ENCODE measurements at regions of chr12 and their contacts with region 1.

Region 1: GRCh38 chr12:92145731-92146496 is at the start of gene BTG1:
- DNase-seq: peak; percentile 95
- ATAC-seq: peak; percentile 77
- H3K4me3 Mint-ChIP-seq: peak within 1 kb of the TSS; percentile 88
- H3K27ac Mint-ChIP-seq: peak within 1 kb of the TSS; percentile 99
- H3K4me1 Mint-ChIP-seq: peaks cover 27% of the 10 kb centered on the region
- H3K27me3 Mint-ChIP-seq: no peaks in the 10 kb centered on the region
- total RNA-seq, gene BTG1: 249 to 255 TPM

Region 2: DNA sequence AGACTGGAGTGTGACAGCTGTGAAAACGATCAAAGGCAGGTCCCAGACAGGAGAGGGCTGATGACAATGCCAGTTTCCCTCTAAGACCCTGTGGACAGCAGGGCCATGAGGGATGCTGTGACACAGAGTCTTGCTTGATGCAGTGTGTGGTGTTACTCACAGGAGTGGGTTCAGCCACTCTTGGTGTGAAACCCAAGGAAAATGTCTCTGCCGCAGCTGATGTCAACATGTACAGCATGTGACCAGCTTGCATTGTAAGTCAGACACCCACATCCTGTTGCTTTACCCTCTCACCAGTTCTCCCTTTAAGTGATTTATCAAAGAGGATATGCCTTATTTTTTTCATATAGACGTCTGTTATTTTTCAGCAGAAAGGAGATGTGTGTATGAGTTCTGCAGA is 268.9 kb before region 1 on chr12:
- POLR2A ChIA-PET with region 1: interaction called, 47 read pairs
- DNase-seq: peak; percentile 64
- ATAC-seq: peak; percentile 100
- H3K4me3 Mint-ChIP-seq: peak overlapping the region; percentile 72
- H3K27ac Mint-ChIP-seq: peak overlapping the region; percentile 94
- H3K4me1 Mint-ChIP-seq: peaks cover 41% of the 10 kb centered on the region
- H3K27me3 Mint-ChIP-seq: no peaks in the 10 kb centered on the region

Region 3: DNA sequence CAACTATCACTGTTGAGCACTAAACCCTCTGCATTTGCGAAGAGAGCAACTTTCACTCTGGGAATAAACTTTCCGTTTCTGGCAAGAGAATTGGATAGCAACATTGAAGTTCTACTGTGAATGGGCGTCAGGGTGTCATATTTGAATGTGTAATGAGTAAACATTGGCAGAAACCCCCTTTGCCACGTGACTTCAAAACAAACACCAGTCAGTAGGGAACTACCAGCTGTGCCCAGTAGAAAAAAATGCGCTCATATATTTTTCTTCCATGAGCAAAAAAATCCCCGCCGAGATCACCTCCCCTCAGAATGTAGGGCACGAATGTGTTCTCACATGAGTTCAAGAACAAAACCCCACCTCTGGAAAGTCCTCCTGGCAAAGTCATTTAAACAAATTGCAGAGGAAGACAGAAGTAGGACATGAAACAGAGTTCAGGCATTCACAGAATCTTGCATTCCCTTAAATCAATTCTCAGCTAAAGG is 80.9 kb before region 1 on chr12:
- POLR2A ChIA-PET with region 1: no interaction called
- DNase-seq: no peak
- ATAC-seq: no peak
- H3K4me3 Mint-ChIP-seq: no peak overlapping the region
- H3K27ac Mint-ChIP-seq: no peak overlapping the region
- H3K4me1 Mint-ChIP-seq: peaks cover 8% of the 10 kb centered on the region
- H3K27me3 Mint-ChIP-seq: no peaks in the 10 kb centered on the region

Region 4: DNA sequence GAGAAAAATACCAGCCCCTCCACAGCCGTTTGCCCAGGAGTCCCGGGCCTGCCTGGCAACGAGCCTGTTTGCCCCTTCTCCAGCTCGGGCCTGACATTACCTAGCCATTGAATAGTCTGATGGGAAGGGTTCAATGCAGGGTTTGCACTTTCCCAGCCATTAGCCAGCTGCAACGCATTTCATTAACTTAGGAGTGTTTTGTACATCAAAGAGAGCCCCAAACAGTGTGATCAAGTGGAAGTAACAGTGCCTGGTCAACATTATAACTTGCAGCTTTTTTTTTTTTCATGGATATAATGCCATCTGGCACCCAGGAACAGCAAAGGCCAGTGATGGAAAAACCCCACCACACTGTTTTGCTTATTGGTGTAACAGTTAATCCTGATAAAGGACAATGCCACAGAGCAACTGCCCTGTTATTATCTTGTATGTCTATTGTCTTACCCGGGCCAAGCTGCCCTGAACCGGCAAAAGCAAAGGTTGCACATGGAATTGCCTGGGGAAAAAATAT is 38.2 kb before region 1 on chr12:
- POLR2A ChIA-PET with region 1: interaction called, 33 read pairs
- DNase-seq: no peak
- ATAC-seq: no peak
- H3K4me3 Mint-ChIP-seq: no peak overlapping the region
- H3K27ac Mint-ChIP-seq: peak overlapping the region; percentile 53
- H3K4me1 Mint-ChIP-seq: peaks cover 61% of the 10 kb centered on the region
- H3K27me3 Mint-ChIP-seq: no peaks in the 10 kb centered on the region

Region 5: GRCh38 chr12:92185052-92185451 is 39.1 kb after region 1 on chr12:
- POLR2A ChIA-PET with region 1: interaction called, 56 read pairs
- DNase-seq: peak; percentile 37
- ATAC-seq: peak; percentile 95
- H3K4me3 Mint-ChIP-seq: peak overlapping the region; percentile 63
- H3K27ac Mint-ChIP-seq: peak overlapping the region; percentile 88
- H3K4me1 Mint-ChIP-seq: peaks cover 45% of the 10 kb centered on the region
- H3K27me3 Mint-ChIP-seq: no peaks in the 10 kb centered on the region

Region 6: DNA sequence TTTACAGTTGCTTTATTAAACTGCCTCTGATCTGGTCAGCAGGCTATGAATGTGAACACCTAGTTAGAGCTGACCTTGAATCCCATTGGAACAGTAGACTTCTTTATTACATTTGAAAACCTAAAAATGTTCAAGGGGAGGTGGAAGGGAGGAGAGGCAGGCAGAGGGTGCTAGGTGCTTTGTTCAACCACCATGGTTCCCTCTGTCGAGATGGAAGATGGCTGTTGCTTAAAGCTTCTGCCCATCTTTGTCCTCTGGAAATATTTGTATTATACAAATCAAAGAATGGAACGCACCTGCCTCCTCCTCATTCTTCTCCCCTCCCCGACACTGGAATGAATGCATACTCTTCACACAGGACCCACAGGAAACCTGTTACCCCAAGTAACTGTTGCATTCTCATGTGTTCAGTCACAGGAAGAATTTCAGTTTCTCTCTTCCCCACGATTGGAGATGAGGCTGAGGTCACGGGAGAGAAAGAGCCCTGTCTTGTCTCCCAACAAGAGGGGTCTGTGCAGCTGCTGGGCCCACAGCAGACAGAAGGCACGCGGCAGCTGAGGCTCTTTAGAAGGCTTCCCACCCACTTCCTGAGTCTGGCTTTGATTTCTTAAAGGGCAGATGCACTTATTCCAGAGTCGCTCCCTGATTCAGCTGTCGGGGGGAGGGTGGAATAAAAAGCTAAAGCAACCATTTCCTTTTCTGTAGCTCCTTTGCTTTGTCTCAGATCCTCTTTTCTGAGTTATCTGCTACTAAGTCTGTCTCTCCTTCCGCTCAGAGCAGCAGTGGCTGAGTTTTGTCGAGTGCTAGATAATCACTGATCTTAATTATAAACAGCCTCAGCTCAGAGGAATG is 217.6 kb after region 1 on chr12:
- POLR2A ChIA-PET with region 1: interaction called, 61 read pairs
- DNase-seq: peak; percentile 58
- ATAC-seq: peak; percentile 75
- H3K4me3 Mint-ChIP-seq: peak overlapping the region; percentile 82
- H3K27ac Mint-ChIP-seq: peak overlapping the region; percentile 87
- H3K4me1 Mint-ChIP-seq: peaks cover 43% of the 10 kb centered on the region
- H3K27me3 Mint-ChIP-seq: no peaks in the 10 kb centered on the region

Region 7: DNA sequence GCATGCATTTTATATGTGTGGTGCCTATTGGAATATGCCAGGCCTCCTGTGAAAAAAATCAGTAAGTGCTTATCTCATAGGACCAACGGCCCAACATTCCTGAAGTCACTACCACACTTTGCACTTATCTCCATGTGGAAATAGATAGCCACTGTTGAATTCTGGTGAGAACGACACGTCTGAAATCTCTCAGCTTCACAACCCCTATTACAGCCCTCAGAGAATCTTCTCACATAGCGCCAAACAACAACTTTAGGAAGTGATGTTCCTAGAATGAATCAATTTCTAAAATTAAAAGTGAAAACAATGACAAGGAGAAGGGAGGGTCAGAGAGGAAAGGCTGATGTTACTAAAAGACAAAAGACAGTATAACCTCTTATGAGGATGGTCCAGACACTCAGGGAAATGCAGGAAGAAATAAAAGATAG is 270.5 kb after region 1 on chr12:
- POLR2A ChIA-PET with region 1: no interaction called
- DNase-seq: no peak
- ATAC-seq: no peak
- H3K4me3 Mint-ChIP-seq: no peak overlapping the region
- H3K27ac Mint-ChIP-seq: no peak overlapping the region
- H3K4me1 Mint-ChIP-seq: peaks cover 10% of the 10 kb centered on the region
- H3K27me3 Mint-ChIP-seq: no peaks in the 10 kb centered on the region

Region 8: GRCh38 chr12:92505254-92506231 is 359.6 kb after region 1 on chr12:
- POLR2A ChIA-PET with region 1: interaction called, 13 read pairs
- DNase-seq: peak; percentile 35
- ATAC-seq: peak; percentile 71
- H3K4me3 Mint-ChIP-seq: peak overlapping the region; percentile 79
- H3K27ac Mint-ChIP-seq: peak overlapping the region; percentile 95
- H3K4me1 Mint-ChIP-seq: peaks cover 24% of the 10 kb centered on the region
- H3K27me3 Mint-ChIP-seq: no peaks in the 10 kb centered on the region

Measured in activated naive CD8-positive, alpha-beta T cell treated with anti-CD3 and anti-CD28 coated beads, Interleukin-2, amount 10 ng/mL, durations not matched to agents 7 days and 5 days (primary cell).